ENCODE measurements at regions of chr9 and their contacts with region 1.

Region 1: DNA sequence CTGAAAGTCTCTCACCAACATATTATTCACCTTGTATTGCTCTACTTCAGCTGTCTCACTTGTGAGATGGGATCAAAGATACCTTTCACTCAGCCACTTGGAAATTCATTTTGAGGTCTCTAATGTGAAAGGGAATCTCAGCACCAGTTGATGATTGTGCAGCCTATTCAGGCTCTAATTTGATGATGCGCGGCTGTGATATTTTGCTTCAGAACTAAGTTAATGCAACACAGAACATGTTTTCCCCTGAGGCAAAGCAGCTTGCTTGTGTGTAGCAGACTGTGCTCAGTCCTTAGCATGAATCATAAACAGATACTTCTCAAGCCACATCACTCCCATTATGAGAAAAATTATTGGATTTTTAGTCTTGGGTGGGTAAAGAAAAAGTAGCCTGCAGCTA is 378.8 kb downstream of the OSTF1 start:
- DNase-seq: no peak
- H3K4me3 ChIP-seq: no peak overlapping the region
- H3K27ac ChIP-seq: no peak overlapping the region
- H3K4me1 ChIP-seq: no peaks in the 10 kb centered on the region
- H3K27me3 ChIP-seq: 0 out of 2 replicates have a peak, but pooled peaks cover 5% of the 10 kb centered on the region
- CTCF ChIP-seq: no peak

Region 2: DNA sequence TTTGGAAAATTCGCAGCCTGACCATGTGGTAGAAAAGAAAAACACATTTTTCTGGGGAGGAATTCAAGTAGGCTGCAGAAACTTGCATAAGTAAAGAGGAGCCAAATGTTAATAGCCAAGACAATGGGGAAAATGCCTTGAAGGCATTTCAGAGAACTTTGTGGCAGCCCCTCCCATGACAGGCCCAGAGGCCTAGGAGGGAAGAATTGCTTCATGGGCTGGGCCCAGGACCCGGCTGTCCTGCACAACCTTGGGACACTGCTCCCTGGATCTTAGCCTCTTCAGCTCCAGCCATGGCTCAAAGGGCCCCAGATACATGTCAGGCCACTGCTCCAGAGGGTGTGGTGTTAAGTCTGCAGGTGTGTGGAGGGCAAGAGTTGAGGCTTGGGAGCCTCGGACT is 220.2 kb before region 1 on chr9:
- CTCF ChIA-PET with region 1: no interaction called
- POLR2A ChIA-PET with region 1: no interaction called
- intact Hi-C with region 1: no loop called
- DNase-seq: no peak
- H3K4me3 ChIP-seq: no peak overlapping the region
- H3K27ac ChIP-seq: no peak overlapping the region
- H3K4me1 ChIP-seq: no peaks in the 10 kb centered on the region
- H3K27me3 ChIP-seq: 0 out of 2 replicates have a peak, but pooled peaks cover 6% of the 10 kb centered on the region
- CTCF ChIP-seq: no peak

Region 3: DNA sequence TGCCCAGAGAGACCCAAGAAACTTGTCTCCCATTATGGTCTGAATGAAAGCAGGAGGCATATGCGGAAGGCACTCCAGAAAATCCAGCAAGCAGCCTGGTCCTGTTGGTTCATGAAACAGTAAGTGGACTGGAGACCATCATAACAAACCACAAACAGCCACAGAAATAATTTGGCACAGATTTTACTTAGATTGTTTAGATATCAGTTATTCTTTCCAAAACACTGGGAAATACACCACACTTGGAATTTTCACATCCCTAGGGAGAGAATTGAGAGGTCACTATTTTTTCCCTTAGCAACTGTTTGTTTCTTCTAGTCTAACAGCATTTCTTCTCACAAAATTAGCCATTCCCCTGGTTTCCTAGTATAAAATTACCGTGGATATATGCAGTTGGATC is 78.0 kb before region 1 on chr9:
- CTCF ChIA-PET with region 1: interaction called, 18 read pairs
- POLR2A ChIA-PET with region 1: no interaction called
- intact Hi-C with region 1: no loop called
- DNase-seq: no peak
- H3K4me3 ChIP-seq: no peak overlapping the region
- H3K27ac ChIP-seq: no peak overlapping the region
- H3K4me1 ChIP-seq: no peaks in the 10 kb centered on the region
- H3K27me3 ChIP-seq: no peaks in the 10 kb centered on the region
- CTCF ChIP-seq: no peak

Measured in PC-9 (cell line).